ENCODE measurements at regions of chr6 and their contacts with region 1.

Region 1: DNA sequence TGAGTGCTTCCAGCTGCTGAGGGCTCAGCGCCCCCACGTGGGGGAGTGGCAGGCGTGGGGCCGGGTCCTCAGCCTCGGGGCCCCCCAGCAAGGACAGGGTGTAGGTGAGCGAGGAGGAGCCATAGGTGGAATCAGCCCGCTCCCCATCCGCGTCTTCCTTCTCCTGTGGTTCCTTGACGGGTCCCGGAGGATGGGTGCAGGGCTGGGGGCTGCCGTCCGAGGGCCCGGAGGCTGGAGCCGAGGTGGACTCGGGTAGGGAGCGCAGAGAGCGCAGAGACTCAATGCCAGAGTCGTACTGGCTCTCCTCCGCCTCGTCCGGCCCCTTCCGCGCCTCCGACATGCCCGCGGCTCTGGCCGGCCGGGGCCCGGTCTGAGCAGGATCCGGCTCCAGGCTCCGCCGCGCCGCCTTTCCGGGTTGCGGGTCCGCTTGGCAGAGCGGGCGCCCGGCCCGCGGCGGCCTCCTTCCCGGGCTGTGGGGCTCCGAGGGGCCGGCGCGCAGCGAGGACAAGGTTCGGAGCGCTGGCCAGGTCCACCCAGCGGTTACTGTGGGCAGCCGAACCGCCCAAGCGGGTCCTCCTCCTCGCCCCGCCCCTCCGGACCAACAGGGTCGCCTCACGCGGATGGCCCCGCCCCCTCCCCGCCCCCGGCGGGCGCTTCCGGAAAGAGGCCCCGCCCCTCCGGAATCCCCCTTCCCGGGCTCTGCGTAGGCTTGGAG is at the start of gene NFKBIE:
- DNase-seq: peak; percentile 94
- H3K4me3 Mint-ChIP-seq: peak within 1 kb of the TSS; percentile 97
- H3K27ac Mint-ChIP-seq: peak within 1 kb of the TSS; percentile 94
- H3K4me1 Mint-ChIP-seq: peaks cover 55% of the 10 kb centered on the region
- H3K27me3 Mint-ChIP-seq: peaks cover 23% of the 10 kb centered on the region
- total RNA-seq, gene NFKBIE: 20.8 to 21.7 TPM

Region 2: GRCh38 chr6:44201638-44202303 is 63.4 kb before region 1 on chr6:
- CTCF ChIA-PET with region 1: no interaction called
- POLR2A ChIA-PET with region 1: no interaction called
- DNase-seq: no peak
- H3K4me3 Mint-ChIP-seq: no peak overlapping the region
- H3K27ac Mint-ChIP-seq: no peak overlapping the region
- H3K4me1 Mint-ChIP-seq: no peaks in the 10 kb centered on the region
- H3K27me3 Mint-ChIP-seq: peaks cover 1% of the 10 kb centered on the region

Region 3: GRCh38 chr6:44246663-44247337 is 18.4 kb before region 1 on chr6 and contains the start of gene HSP90AB1:
- CTCF ChIA-PET with region 1: interaction called, 6 read pairs
- POLR2A ChIA-PET with region 1: interaction called, 110 read pairs
- DNase-seq: peak; percentile 98
- H3K4me3 Mint-ChIP-seq: peak within 1 kb of the TSS; percentile 99
- H3K27ac Mint-ChIP-seq: peak within 1 kb of the TSS; percentile 97
- H3K4me1 Mint-ChIP-seq: peaks cover 49% of the 10 kb centered on the region
- H3K27me3 Mint-ChIP-seq: no peaks in the 10 kb centered on the region
- total RNA-seq, gene HSP90AB1: 478 to 479 TPM

Region 4: DNA sequence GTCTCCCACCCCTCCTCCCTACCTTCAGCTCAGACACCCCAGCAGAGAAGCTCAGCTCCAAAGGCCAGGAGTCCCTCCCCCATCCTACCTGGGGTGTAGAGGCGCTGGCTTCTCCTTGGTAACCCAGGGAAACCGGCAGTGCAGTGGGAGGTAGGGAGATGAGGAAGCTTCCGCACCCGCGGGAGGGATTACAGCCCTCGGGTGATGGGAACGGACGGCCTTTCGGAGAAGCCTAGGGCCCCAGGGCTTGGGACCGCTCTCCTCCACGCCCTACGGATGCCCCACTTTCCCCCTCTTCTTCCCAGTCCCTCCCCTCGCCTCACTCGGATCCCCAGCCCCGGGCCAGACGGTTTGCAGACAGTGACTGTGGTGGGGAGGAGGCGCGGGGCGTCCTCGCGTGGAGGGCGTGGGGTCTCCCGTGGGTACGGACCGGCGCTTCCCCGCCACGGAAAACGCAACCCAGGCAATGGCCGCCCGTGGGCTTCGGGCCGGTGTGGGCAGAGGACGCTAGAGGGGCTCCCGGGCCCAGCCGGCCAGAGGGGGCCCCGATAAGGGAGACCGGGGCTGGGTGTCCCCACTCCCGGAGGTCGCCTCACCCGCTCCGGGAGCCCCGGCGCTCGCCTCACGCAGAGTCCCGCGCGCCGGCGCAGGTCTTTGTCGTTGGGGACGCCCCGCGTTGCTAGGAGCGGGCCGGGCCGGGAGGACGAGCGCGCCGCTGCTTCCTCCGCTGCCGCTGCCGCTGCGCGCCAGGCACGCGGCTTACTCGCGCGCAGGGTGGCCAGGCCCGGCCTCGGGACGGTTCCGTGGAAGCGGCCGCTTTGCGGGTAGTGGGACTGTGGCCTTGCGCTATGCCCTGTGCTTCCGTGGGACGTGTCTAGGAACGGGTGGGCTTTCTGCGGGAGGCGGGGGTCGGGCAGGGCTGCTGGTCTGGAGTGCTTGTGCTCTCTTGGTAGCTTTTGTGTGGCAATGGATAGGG is 32.2 kb after region 1 on chr6:
- CTCF ChIA-PET with region 1: interaction called, 14 read pairs
- POLR2A ChIA-PET with region 1: no interaction called
- DNase-seq: peak; percentile 51
- H3K4me3 Mint-ChIP-seq: peak overlapping the region; percentile 4
- H3K27ac Mint-ChIP-seq: no peak overlapping the region
- H3K4me1 Mint-ChIP-seq: peaks cover 6% of the 10 kb centered on the region
- H3K27me3 Mint-ChIP-seq: peaks cover 42% of the 10 kb centered on the region

Region 5: GRCh38 chr6:44304282-44305199 is 39.4 kb after region 1 on chr6:
- CTCF ChIA-PET with region 1: interaction called, 36 read pairs
- POLR2A ChIA-PET with region 1: interaction called, 3 read pairs
- DNase-seq: peak; percentile 41
- H3K4me3 Mint-ChIP-seq: no peak overlapping the region
- H3K27ac Mint-ChIP-seq: no peak overlapping the region
- H3K4me1 Mint-ChIP-seq: no peaks in the 10 kb centered on the region
- H3K27me3 Mint-ChIP-seq: no peaks in the 10 kb centered on the region

Region 6: DNA sequence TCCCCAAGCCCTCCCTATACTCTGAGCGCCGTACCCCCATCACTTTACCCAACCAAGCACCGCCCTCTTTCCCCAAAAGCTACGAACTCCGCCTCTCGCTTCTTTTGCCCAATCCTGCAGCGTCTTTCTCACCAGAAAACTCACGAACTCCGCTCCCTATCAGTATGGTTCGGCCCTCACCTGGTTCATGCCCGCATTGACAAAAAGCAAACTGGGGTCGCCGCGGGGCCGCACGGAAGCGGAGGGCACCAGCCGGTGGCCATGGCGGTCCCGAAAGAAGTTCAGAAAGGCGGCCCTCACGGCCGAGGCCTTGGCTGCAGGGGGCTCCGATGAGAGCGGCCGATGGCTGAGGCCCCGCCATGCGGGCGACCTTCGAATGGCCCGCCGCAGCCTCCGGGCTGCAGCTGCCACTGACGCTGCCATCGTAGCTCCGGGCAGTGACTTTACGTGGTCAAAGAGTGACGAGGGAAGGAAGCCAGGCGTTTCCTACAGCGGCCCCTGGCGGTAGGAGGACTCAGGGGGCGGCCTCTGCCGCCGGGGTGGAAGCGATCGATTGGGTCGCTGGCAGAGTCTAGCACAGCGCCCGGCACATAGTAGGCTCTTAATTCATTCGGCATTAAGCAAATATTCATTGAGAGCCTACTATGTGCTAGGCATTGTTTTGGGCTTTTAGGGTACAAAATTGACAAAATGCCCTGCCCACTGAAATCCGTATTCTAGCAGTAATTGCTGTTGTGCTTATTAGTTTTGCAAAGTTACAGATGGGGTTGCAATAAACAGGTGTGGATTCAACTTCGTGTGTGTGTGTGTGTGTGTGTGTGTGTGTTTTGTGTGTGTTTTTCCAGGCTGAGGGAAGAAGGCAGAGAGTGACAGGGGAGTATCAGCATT is 48.0 kb after region 1 on chr6 and contains the start of gene AARS2:
- CTCF ChIA-PET with region 1: interaction called, 24 read pairs
- POLR2A ChIA-PET with region 1: interaction called, 11 read pairs
- DNase-seq: peak; percentile 92
- H3K4me3 Mint-ChIP-seq: peak within 1 kb of the TSS; percentile 96
- H3K27ac Mint-ChIP-seq: peak within 1 kb of the TSS; percentile 84
- H3K4me1 Mint-ChIP-seq: peaks cover 18% of the 10 kb centered on the region
- H3K27me3 Mint-ChIP-seq: peaks cover 13% of the 10 kb centered on the region
- total RNA-seq, gene AARS2: 14.8 to 15.0 TPM

Region 7: DNA sequence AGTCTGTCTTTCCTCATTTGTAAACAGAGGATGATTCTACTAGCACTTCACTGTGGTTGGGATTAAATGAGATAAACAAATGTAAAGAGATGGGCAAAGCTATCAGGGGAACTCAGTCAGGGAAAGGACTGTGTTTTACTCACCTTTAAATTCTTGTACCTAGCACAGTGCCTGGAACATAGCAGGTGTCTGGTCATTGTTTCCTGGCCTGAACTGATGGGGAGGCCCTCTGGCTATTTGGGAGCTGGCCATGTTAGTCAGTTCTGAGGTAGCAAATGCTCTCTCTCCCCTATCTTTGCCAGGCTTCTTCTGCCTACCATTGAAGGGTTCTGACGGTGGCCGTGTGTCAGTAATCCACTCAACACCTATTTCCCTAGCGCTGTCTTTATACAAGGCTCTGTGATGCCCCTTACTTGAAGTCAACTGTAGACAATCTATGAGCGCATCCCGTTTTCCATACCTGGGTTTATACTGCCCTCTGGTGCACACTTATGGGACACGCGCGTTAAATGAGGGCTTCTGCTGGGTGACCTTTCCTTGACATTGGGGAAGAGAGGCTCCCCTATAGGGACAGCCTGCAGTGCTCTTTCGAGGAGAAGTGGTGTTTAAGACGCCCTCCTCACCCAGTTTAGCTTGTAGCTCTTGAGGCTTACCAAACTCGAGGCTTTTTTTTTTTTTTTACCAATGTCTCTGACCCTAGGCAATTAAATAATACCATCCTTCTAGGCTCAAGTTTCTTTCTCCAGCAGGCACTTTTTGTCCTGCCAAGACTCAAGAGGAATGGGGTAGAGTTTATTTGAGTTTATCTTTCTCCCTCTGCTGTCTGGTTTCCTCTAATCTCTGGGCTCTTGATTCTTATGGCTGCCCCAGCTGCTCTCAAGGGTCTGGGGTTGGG is 73.3 kb after region 1 on chr6:
- CTCF ChIA-PET with region 1: interaction called, 69 read pairs
- POLR2A ChIA-PET with region 1: interaction called, 6 read pairs
- DNase-seq: peak; percentile 73
- H3K4me3 Mint-ChIP-seq: no peak overlapping the region
- H3K27ac Mint-ChIP-seq: no peak overlapping the region
- H3K4me1 Mint-ChIP-seq: no peaks in the 10 kb centered on the region
- H3K27me3 Mint-ChIP-seq: peaks cover 27% of the 10 kb centered on the region

Region 8: GRCh38 chr6:44353336-44353735 is 88.2 kb after region 1 on chr6:
- CTCF ChIA-PET with region 1: no interaction called
- POLR2A ChIA-PET with region 1: no interaction called
- DNase-seq: no peak
- H3K4me3 Mint-ChIP-seq: no peak overlapping the region
- H3K27ac Mint-ChIP-seq: no peak overlapping the region
- H3K4me1 Mint-ChIP-seq: no peaks in the 10 kb centered on the region
- H3K27me3 Mint-ChIP-seq: peaks cover 25% of the 10 kb centered on the region

Region 9: DNA sequence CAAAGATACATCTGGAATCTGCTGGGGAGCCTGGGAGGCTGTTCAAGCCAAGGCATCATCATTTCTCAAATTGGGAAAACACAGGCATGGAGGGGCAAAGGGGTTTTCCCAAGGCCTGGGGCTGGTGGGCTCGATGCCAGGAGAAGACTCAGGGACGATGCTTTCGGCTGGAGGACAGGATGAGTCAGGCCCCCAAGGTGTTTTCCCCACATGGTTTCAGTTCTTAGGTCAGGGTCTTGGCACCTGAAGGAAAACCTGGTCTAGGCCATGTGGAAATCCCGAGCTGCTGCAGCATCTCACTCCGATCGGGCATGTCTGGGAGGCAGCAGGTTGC is 470.4 kb after region 1 on chr6:
- CTCF ChIA-PET with region 1: no interaction called
- POLR2A ChIA-PET with region 1: no interaction called
- DNase-seq: no peak
- H3K4me3 Mint-ChIP-seq: no peak overlapping the region
- H3K27ac Mint-ChIP-seq: no peak overlapping the region
- H3K4me1 Mint-ChIP-seq: peaks cover 3% of the 10 kb centered on the region
- H3K27me3 Mint-ChIP-seq: no peaks in the 10 kb centered on the region

Measured in activated CD4-positive, alpha-beta memory T cell treated with anti-CD3 and anti-CD28 coated beads, Interleukin-2, amount 10 ng/mL, durations not matched to agents 7 days and 5 days (primary cell).